Endothelial cell of umbilical vein (primary cell): ENCODE measurements at regions of chr11 and their contacts with region 1.

Region 1: GRCh38 chr11:117098269-117099232 is at the start of gene SIK3:
- DNase-seq: peak; percentile 92
- H3K4me3 ChIP-seq: peak within 1 kb of the TSS; percentile 67 to 82 (median 74)
- H3K27ac ChIP-seq: peak within 1 kb of the TSS; percentile 98
- H3K4me1 ChIP-seq: peaks cover 17% of the 10 kb centered on the region
- H3K27me3 ChIP-seq: no peaks in the 10 kb centered on the region
- CTCF ChIP-seq: peak; percentile 15 to 53
- POLR2A ChIP-seq: no peak
- total RNA-seq, gene SIK3: 20.6 and 21.3 TPM in 2 replicates

Region 2: DNA sequence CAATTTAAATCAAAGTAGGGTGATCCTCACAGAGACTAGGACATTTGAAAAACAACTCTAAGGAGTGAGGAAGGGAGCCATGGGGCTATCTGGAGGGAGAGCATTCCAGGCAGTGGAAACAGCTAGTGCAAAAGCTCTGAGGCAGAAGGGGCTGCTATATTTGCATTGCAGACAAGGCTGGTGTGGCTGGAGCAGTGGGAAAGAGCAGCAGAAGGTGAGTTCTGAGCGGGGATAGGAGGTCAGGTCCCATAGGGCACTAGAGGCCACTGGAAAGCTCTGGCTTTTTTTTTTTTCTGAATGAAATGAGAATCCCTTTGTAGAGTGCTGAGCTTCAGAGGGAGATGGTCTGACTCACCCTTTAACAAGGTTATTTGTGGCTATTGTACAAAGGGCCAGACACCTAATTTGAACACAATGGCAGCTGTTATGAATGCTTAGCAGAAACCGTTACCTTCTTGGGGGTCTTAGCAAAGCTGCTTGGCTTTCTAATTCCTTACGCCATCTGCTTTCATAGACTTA is 617.4 kb before region 1 on chr11:
- CTCF ChIA-PET with region 1: no interaction called
- POLR2A ChIA-PET with region 1: no interaction called
- dilution Hi-C with region 1: no loop called
- intact Hi-C with region 1: no loop called
- DNase-seq: no peak
- H3K4me3 ChIP-seq: no peak overlapping the region
- H3K27ac ChIP-seq: no peak overlapping the region
- H3K4me1 ChIP-seq: no peaks in the 10 kb centered on the region
- H3K27me3 ChIP-seq: peaks cover 3 to 9% of the 10 kb centered on the region in 2 experiments
- CTCF ChIP-seq: no peak
- POLR2A ChIP-seq: no peak

Region 3: DNA sequence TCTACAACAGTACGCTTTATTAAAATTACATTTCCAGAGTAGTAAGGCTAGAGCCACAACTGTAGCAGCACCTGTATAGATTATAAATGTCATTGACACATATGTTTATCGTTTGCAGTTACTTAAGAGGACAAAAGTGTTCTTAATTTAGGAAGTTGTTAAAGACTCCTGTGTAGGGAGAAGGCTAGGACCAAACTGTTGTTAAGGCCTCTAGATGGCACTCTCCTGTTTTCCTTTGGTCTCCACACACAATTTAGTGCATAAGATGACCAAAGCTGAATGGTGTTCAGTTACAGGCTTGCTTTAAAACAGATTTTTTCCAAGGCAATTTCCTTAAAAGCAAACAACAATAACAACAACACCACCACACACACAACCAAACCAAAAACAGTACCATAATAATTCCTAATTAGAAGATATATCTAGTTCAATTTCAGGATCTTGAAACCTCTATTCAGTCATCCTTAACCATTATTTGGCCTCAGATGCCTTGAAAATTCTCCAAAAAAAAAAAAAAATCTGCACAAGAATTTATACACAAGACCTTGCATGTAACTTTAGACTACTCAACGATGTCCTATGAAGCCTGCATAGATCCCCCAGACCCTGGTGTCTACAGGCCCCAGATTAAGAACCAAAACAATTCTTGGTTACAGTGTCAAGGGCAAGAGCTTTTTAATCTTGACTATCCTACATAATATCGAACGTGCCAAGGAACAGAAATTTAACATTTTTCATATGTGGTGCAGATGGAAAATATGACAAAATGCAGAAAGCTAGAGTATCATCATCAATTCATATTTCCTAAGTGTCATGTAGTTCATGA is 218.5 kb before region 1 on chr11:
- CTCF ChIA-PET with region 1: interaction called, 26 read pairs
- POLR2A ChIA-PET with region 1: no interaction called
- dilution Hi-C with region 1: no loop called
- intact Hi-C with region 1: loop called (anchors 2 kb)
- DNase-seq: peak; percentile 76
- H3K4me3 ChIP-seq: no peak overlapping the region
- H3K27ac ChIP-seq: no peak overlapping the region
- H3K4me1 ChIP-seq: no peaks in the 10 kb centered on the region
- H3K27me3 ChIP-seq: no peaks in the 10 kb centered on the region
- CTCF ChIP-seq: peak; percentile 55 to 68
- POLR2A ChIP-seq: no peak

Region 4: GRCh38 chr11:117010808-117011540 is 87.6 kb before region 1 on chr11:
- CTCF ChIA-PET with region 1: no interaction called
- POLR2A ChIA-PET with region 1: no interaction called
- dilution Hi-C with region 1: no loop called
- intact Hi-C with region 1: loop called (anchors 5 kb)
- DNase-seq: peak; percentile 37
- H3K4me3 ChIP-seq: no peak overlapping the region
- H3K27ac ChIP-seq: no peak overlapping the region
- H3K4me1 ChIP-seq: no peaks in the 10 kb centered on the region
- H3K27me3 ChIP-seq: no peaks in the 10 kb centered on the region
- CTCF ChIP-seq: no peak
- POLR2A ChIP-seq: no peak

Region 5: GRCh38 chr11:117037279-117037974 is 61.1 kb before region 1 on chr11:
- CTCF ChIA-PET with region 1: no interaction called
- POLR2A ChIA-PET with region 1: interaction called, 6 read pairs
- dilution Hi-C with region 1: no loop called
- intact Hi-C with region 1: loop called (anchors 5 kb)
- DNase-seq: peak; percentile 82
- H3K4me3 ChIP-seq: no peak overlapping the region
- H3K27ac ChIP-seq: no peak overlapping the region
- H3K4me1 ChIP-seq: peaks cover 13% of the 10 kb centered on the region
- H3K27me3 ChIP-seq: no peaks in the 10 kb centered on the region
- CTCF ChIP-seq: no peak
- POLR2A ChIP-seq: no peak

Region 6: GRCh38 chr11:117058761-117059261 is 39.7 kb before region 1 on chr11:
- CTCF ChIA-PET with region 1: interaction called, 3 read pairs
- POLR2A ChIA-PET with region 1: interaction called, 3 read pairs
- dilution Hi-C with region 1: no loop called
- intact Hi-C with region 1: loop called (anchors 1 kb)
- DNase-seq: peak; percentile 84
- H3K4me3 ChIP-seq: peak overlapping the region in 1 of 3 experiments; percentile 13
- H3K27ac ChIP-seq: peak overlapping the region; percentile 42
- H3K4me1 ChIP-seq: peaks cover 17% of the 10 kb centered on the region
- H3K27me3 ChIP-seq: no peaks in the 10 kb centered on the region
- CTCF ChIP-seq: no peak
- POLR2A ChIP-seq: no peak

Region 7: GRCh38 chr11:117072517-117073461 is 25.8 kb before region 1 on chr11:
- CTCF ChIA-PET with region 1: interaction called, 5 read pairs
- POLR2A ChIA-PET with region 1: no interaction called
- dilution Hi-C with region 1: no loop called
- intact Hi-C with region 1: loop called (anchors 1 kb)
- DNase-seq: peak; percentile 90
- H3K4me3 ChIP-seq: no peak overlapping the region
- H3K27ac ChIP-seq: no peak overlapping the region
- H3K4me1 ChIP-seq: peaks cover 31% of the 10 kb centered on the region
- H3K27me3 ChIP-seq: no peaks in the 10 kb centered on the region
- CTCF ChIP-seq: no peak
- POLR2A ChIP-seq: peak; percentile 41

Region 8: GRCh38 chr11:117717485-117718314 is 619.1 kb after region 1 on chr11:
- CTCF ChIA-PET with region 1: no interaction called
- POLR2A ChIA-PET with region 1: no interaction called
- dilution Hi-C with region 1: no loop called
- intact Hi-C with region 1: no loop called
- DNase-seq: no peak
- H3K4me3 ChIP-seq: no peak overlapping the region
- H3K27ac ChIP-seq: no peak overlapping the region
- H3K4me1 ChIP-seq: no peaks in the 10 kb centered on the region
- H3K27me3 ChIP-seq: peaks cover 2% of the 10 kb centered on the region in 2 experiments
- CTCF ChIP-seq: no peak
- POLR2A ChIP-seq: no peak